Ascending aorta (tissue), 2 donors: ENCODE measurements at regions of chr1 and their contacts with region 1.

Region 1: GRCh38 chr1:55428944-55429931 is 214.1 kb upstream of the USP24 start:
- DNase-seq: peak; percentile 69 to 93
- H3K4me3 ChIP-seq: no peak overlapping the region
- H3K27ac ChIP-seq: peak overlapping the region; percentile 64 to 87
- H3K4me1 ChIP-seq: peaks cover 6 to 25% of the 10 kb centered on the region in 2 donors
- H3K27me3 ChIP-seq: no peaks in the 10 kb centered on the region
- CTCF ChIP-seq: no peak

Region 2: DNA sequence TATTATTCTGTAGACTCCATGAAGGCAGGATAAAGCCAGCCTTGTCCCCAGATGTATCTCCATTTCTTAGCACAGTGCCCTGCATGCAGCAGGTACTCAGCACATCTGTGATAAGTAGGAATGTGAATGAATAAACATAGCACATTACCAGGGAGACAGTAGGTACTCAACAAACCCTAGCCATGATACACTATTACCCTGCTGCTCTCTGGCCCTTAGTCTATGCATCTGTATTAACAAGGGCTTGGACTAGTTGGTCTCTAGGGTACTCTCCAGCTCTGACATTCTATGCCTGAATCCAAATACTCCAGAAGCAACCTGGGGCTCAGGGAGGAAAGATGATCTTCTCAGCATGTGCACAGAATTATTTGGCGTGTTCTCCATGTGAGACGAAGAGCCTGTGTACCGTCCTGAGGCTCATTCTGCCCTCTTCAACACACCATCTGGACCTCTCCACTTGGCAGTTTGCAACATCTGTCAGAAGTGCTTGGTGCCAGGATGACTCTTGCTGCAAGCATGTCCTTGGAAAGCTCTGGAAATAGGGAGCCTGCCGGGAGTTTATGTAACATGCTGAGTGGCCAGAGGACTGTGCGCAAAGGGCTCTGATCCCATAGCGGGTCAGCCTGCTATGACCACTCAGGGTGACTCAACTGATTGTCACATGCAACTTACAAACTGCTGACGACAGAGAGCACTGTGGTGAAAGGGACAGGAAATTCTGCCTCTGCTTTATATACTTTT is 14.1 kb after region 1 on chr1:
- intact Hi-C with region 1: loop called (anchors 1 kb)
- DNase-seq: peak; percentile 91 to 97
- H3K4me3 ChIP-seq: no peak overlapping the region
- H3K27ac ChIP-seq: peak overlapping the region; percentile 62 to 79
- H3K4me1 ChIP-seq: peaks cover 5 to 16% of the 10 kb centered on the region in 2 donors
- H3K27me3 ChIP-seq: no peaks in the 10 kb centered on the region
- CTCF ChIP-seq: no peak

Region 3: GRCh38 chr1:55632058-55632457 is 202.8 kb after region 1 on chr1:
- intact Hi-C with region 1: loop called (anchors 5 kb)
- DNase-seq: no peak
- H3K4me3 ChIP-seq: no peak overlapping the region
- H3K27ac ChIP-seq: peak overlapping the region; percentile 63 to 66
- H3K4me1 ChIP-seq: peaks cover 20 to 42% of the 10 kb centered on the region in 2 donors
- H3K27me3 ChIP-seq: no peaks in the 10 kb centered on the region
- CTCF ChIP-seq: no peak

Region 4: DNA sequence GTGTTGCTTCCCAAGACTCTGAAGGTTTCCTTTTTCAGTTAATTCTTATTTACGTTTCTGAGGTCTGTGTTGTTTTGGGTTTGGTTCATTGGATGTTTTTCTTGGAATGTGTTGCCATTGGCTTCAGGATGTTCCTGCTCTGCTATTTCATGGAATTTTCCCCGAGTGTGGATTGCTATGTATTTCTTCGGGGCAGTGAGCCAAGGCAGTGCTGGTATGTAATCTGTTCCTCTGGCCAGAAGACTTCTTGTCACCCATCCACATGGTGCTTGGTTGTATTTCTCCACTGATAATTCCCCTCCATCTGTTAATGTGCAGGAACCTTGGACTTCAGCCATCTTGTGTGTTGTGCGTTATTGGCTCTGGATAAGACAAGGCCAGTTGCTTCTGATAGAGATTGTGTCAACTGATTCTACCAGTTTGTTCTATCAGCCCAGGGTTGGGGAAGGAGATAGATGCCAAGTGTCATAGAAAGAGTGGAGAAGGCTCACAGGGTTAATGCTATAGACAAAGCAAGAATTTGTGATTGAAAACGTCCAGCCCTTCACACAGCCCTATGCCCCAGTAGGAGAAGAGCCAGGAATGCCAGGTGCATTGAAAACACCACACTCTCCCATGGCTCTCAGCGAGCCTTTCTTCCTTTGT is 644.9 kb after region 1 on chr1:
- intact Hi-C with region 1: loop called (anchors 5 kb)
- DNase-seq: peak in 1 of 2 donors; percentile 91
- H3K4me3 ChIP-seq: peak overlapping the region in 1 of 2 donors; percentile 5
- H3K27ac ChIP-seq: peak overlapping the region; percentile 81 to 90
- H3K4me1 ChIP-seq: peaks cover 4 to 21% of the 10 kb centered on the region in 2 donors
- H3K27me3 ChIP-seq: no peaks in the 10 kb centered on the region
- CTCF ChIP-seq: no peak